ENCODE measurements at regions of chr22 and their contacts with region 1.

Region 1: GRCh38 chr22:22463855-22464540 is 44.5 kb downstream of the ZNF280B start:
- DNase-seq: peak; percentile 51
- ATAC-seq: peak; percentile 92
- H3K4me3 ChIP-seq: peak overlapping the region in 1 of 2 experiments; percentile 8; a peak in 1 of 4 replicates
- H3K27ac ChIP-seq: no peak overlapping the region
- H3K4me1 ChIP-seq: no peaks in the 10 kb centered on the region
- H3K27me3 ChIP-seq: no peaks in the 10 kb centered on the region
- CTCF ChIP-seq: peak; percentile 53 to 81 (median 59); a peak in 4 of 6 replicates
- POLR2A ChIP-seq: no peak
- RAD21 ChIP-seq: peak; percentile 78

Region 2: GRCh38 chr22:22422629-22423112 is 41.3 kb before region 1 on chr22:
- CTCF ChIA-PET with region 1: interaction called, 12 read pairs
- POLR2A ChIA-PET with region 1: no interaction called
- RAD21 ChIA-PET with region 1: no interaction called
- intact Hi-C with region 1: no loop called
- DNase-seq: peak; percentile 56
- ATAC-seq: peak; percentile 92
- H3K4me3 ChIP-seq: no peak overlapping the region
- H3K27ac ChIP-seq: no peak overlapping the region
- H3K4me1 ChIP-seq: peaks cover 0 to 3% of the 10 kb centered on the region in 2 experiments; a peak in 1 of 4 replicates
- H3K27me3 ChIP-seq: peaks cover 56% of the 10 kb centered on the region
- CTCF ChIP-seq: peak; percentile 35 to 94 (median 86); a peak in 5 of 6 replicates
- POLR2A ChIP-seq: no peak
- RAD21 ChIP-seq: peak; percentile 30; the same call in 1 of the 2 replicates

Region 3: GRCh38 chr22:22431271-22432220 is 32.5 kb before region 1 on chr22:
- CTCF ChIA-PET with region 1: interaction called, 11 read pairs
- POLR2A ChIA-PET with region 1: no interaction called
- RAD21 ChIA-PET with region 1: no interaction called
- intact Hi-C with region 1: no loop called
- DNase-seq: peak; percentile 34
- ATAC-seq: peak; percentile 99
- H3K4me3 ChIP-seq: no peak overlapping the region
- H3K27ac ChIP-seq: no peak overlapping the region
- H3K4me1 ChIP-seq: no peaks in the 10 kb centered on the region
- H3K27me3 ChIP-seq: peaks cover 19% of the 10 kb centered on the region
- CTCF ChIP-seq: peak; percentile 51 to 64 (median 64)
- POLR2A ChIP-seq: no peak
- RAD21 ChIP-seq: peak; percentile 52; the same call in 1 of the 2 replicates

Region 4: DNA sequence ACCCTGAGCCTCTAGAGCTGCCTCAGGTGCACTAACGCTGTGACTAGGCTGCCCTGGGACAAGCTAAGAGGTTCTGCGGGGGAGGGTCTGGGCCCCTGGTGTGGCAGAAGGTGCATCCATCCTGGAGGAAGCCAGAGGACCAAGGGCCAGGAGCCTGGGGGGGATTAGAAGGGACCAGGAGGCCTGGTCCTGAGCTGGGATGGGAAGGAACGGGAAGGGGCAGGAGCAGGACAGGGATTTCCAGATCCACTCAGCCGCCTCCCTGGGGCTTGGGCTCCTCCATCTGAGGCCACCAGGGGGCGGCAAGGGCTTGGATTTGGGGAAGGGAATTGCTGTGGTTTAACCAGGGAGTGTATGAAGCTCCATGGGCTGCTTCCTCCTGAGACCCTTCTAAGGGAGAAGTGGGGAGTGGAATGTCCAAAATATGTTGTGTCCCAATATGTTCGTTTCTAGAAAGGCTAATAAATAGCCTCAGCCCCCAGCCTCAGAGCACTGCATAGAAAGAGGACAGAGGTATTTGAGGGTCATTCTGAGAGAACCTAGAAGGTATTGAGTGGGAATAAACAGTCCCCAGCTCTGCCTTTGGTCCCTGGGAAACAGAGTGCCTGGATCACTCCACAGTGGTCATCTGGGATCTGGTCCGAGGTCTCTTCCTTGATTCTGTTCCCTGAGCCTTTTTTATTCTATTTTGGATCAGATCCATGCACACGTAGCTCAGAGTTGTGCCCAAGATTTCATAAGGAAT is 112.4 kb after region 1 on chr22:
- CTCF ChIA-PET with region 1: interaction called, 11 read pairs
- POLR2A ChIA-PET with region 1: no interaction called
- RAD21 ChIA-PET with region 1: no interaction called
- intact Hi-C with region 1: loop called (anchors 10 kb)
- DNase-seq: peak; percentile 29
- ATAC-seq: peak; percentile 99
- H3K4me3 ChIP-seq: no peak overlapping the region
- H3K27ac ChIP-seq: no peak overlapping the region
- H3K4me1 ChIP-seq: peaks cover 5 to 9% of the 10 kb centered on the region in 2 experiments; a peak in 3 of 4 replicates
- H3K27me3 ChIP-seq: no peaks in the 10 kb centered on the region
- CTCF ChIP-seq: peak; percentile 56 to 95 (median 90); a peak in 5 of 6 replicates
- POLR2A ChIP-seq: no peak
- RAD21 ChIP-seq: peak; percentile 62

Region 5: GRCh38 chr22:22588485-22589164 is 124.6 kb after region 1 on chr22:
- CTCF ChIA-PET with region 1: interaction called, 8 read pairs
- POLR2A ChIA-PET with region 1: no interaction called
- RAD21 ChIA-PET with region 1: no interaction called
- intact Hi-C with region 1: loop called (anchors 10 kb)
- DNase-seq: no peak
- ATAC-seq: no peak
- H3K4me3 ChIP-seq: no peak overlapping the region
- H3K27ac ChIP-seq: no peak overlapping the region
- H3K4me1 ChIP-seq: peaks cover 0 to 3% of the 10 kb centered on the region in 2 experiments; a peak in 1 of 4 replicates
- H3K27me3 ChIP-seq: no peaks in the 10 kb centered on the region
- CTCF ChIP-seq: no peak
- POLR2A ChIP-seq: no peak
- RAD21 ChIP-seq: no peak

Region 6: DNA sequence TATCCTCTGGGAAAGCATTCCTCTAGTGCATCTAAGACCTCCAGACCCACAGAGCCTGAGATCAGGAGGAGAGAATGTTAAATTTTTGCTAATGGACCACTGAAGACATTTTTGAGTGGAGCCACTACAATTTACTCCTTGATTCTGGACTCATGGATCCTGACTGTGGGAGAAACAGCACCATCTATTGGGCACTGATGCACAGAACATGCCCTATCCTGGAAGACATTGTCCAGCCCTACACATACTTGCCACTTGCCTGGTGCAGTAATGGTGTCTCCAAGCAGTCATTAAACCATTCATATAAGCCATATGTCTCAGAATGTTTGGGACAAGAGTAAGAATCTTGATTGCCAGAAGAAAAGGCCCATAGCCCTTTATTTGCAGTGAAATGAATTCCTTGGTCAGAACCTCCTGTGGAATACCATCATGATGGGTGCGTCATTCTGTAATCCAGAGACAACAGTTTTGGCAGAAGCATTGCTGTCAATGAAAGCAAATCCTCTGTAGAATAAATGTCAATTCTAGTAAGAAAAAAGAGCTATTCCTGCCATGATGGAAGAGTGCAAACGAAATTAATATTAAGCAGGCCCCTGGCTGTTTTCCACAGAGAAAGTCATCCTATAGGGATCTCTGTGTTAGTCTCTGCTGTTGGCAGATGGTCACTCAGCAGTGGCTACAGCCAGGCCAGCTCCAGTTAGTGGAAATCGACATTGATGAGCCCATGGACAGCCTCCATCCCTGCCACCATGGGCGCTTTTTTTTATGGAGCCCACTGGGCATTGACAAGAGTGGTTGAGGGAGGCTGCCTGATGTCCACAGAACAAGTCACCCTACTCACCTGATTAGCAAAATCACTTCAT is 223.9 kb after region 1 on chr22:
- CTCF ChIA-PET with region 1: interaction called, 13 read pairs
- POLR2A ChIA-PET with region 1: no interaction called
- RAD21 ChIA-PET with region 1: no interaction called
- intact Hi-C with region 1: no loop called
- DNase-seq: no peak
- ATAC-seq: peak; percentile 89
- H3K4me3 ChIP-seq: no peak overlapping the region
- H3K27ac ChIP-seq: no peak overlapping the region
- H3K4me1 ChIP-seq: peaks cover 0 to 6% of the 10 kb centered on the region in 2 experiments; a peak in 3 of 4 replicates
- H3K27me3 ChIP-seq: no peaks in the 10 kb centered on the region
- CTCF ChIP-seq: peak; percentile 56 to 83 (median 82); a peak in 5 of 6 replicates
- POLR2A ChIP-seq: no peak
- RAD21 ChIP-seq: peak; percentile 58